IMR-90 (cell line): ENCODE measurements at regions of chr15 and their contacts with region 1.

Region 1: GRCh38 chr15:70047386-70048197 is 50.1 kb downstream of the TLE3 start:
- DNase-seq: peak; percentile 18
- ATAC-seq: peak; percentile 59; the same call in 1 of the 2 replicates
- H3K4me3 ChIP-seq: no peak overlapping the region
- H3K27ac ChIP-seq: no peak overlapping the region
- H3K4me1 ChIP-seq: peaks cover 2% of the 10 kb centered on the region; the same call in 1 of the 2 replicates
- H3K27me3 ChIP-seq: no peaks in the 10 kb centered on the region
- CTCF ChIP-seq: no peak
- POLR2A ChIP-seq: no peak
- RAD21 ChIP-seq: no peak

Region 2: DNA sequence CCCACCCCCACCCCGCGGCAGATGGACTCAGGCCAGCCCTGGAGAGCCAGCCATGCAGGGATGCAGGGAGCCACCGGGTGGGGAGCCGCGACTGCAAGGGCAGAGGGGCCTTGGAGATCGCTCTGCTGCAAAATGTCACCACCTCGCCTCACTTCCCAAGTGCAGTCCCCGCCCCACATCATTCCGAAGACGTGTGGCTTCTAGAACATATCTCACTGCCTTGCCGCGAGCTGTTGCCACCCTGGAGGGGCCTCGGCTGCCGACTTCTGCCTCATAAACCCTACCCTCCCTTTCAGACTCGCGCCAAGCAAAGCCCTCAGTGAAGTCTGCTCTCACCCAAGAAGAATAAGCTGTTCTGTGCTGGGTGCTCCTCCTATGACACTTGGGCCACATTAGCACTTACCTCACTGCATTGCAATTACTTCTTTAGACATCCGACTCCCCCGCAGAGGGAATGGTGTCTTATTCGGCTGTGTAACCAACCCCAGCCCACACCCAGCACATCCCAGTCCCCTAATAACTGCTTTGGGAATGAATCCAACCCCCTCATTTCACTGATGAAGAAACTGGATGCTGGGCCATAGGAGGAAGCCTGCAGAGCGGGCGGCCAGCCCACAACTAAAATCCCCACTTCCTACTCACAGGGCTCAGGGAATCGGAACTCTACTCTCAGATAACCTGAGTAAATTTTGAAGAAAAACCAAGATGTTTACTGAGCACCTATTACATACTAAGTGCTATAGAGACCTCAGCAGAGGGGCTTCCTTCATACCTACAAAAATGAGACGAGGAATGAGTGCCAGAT is 41.5 kb after region 1 on chr15:
- CTCF ChIA-PET with region 1: no interaction called
- POLR2A ChIA-PET with region 1: interaction called, 10 read pairs
- dilution Hi-C with region 1: no loop called
- in situ Hi-C with region 1: no loop called
- intact Hi-C with region 1: no loop called
- DNase-seq: peak; percentile 71
- ATAC-seq: peak; percentile 80
- H3K4me3 ChIP-seq: no peak overlapping the region
- H3K27ac ChIP-seq: peak overlapping the region; percentile 28
- H3K4me1 ChIP-seq: peaks cover 37% of the 10 kb centered on the region
- H3K27me3 ChIP-seq: no peaks in the 10 kb centered on the region
- CTCF ChIP-seq: no peak
- POLR2A ChIP-seq: no peak; the same call in 1 of the 2 replicates
- RAD21 ChIP-seq: no peak